GM18951 (cell line): ENCODE measurements at regions of chr19 and their contacts with region 1.

Region 1: DNA sequence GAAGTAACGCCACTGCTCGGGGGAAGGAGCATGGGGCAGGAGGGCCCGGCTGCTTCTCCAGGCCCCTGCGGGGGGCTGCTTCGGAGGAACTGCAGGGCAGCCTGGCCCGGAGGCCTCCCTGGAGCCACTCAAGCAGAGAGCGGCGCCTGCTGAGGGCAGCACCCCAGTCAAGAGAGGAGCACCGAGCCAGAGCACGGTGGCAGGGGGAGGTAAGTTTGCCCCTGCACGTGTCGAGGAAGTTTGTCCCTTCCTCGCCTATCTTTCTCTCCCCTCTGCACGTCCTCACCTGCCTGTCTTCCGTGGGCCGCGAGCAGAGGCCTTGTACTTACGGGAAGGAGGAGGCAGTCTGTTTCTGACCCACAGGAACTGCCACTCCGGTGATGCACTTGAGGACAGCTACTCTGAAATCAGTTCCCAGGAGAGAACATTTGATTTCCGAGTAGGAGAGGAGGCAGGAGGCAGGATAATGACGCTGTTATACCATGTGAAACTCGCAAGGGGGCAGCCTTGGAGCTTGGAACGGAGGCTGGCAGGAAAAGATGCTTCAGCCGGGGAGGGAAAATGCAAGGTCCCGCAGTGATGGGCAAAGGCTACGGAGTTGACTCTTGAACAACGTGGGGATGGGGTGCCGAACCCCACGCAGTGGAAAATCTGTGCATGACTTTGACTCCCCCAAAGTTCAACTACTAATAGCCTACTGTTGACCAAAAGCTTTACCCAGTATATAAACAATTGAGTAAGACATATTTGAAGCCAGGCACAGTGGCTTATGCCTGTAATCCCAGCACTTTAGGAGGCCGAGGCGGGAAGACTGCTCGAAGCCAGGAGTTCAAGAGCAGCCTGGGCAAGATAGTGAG is 5.0 kb downstream of the FFAR1 start:
- POLR2A ChIP-seq: no peak

Region 2: GRCh38 chr19:35240327-35240726 is 112.3 kb before region 1 on chr19:
- in situ Hi-C with region 1: no loop called
- POLR2A ChIP-seq: no peak

Region 3: GRCh38 chr19:35471946-35472345 is 119.3 kb after region 1 on chr19:
- in situ Hi-C with region 1: loop called (anchors 5 kb)
- POLR2A ChIP-seq: no peak

Region 4: GRCh38 chr19:35501684-35502083 is 149.0 kb after region 1 on chr19:
- in situ Hi-C with region 1: no loop called
- POLR2A ChIP-seq: no peak